ENCODE measurements at regions of chr18 and their contacts with region 1.

Region 1: DNA sequence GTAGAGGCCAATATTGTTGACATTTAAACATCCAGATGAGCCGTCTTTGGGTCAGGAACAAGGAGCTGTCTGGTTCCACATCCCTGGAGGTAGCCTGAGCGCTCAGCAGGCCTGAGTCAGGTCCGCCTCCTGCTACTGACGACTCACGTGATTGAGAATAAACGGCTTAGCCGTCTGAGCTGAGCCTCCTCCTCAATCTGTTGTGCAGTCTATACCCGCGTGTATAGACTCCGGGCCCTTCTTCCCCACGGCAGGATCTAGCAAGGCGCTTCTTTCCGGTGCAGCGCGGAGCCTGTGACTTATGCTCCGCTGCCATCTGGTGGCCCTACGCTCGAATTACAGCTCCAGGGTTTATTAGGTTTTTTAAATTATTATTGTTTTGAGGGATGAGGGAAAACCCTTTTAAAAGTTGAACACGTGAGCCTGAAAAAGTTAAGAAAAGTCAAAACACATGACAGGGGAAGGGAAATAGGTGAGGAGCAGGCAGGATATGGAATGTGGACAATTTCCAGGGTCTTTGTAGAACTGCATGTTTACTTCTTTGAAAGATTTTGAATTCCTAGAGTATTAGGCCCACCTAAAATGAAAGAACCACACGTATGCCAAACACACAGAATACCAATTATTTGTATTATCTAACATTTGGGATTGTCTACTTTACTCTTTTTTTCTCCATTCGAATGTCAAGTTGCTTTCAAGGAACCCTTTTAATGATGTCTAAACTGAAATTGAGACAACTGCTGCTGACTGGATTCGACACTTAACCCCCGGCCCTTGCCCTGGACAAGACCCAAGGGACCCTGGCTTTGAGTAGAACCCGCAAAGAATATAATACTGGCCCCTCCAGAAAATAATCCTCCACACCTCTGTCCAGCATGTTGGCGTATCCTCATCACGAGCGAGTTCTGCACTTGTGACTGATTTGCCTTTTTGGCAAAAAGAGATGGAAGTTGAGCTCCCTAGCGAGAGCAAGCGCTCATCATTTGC is 112.4 kb upstream of the ZNF236 start:
- DNase-seq: peak; percentile 92

Region 2: DNA sequence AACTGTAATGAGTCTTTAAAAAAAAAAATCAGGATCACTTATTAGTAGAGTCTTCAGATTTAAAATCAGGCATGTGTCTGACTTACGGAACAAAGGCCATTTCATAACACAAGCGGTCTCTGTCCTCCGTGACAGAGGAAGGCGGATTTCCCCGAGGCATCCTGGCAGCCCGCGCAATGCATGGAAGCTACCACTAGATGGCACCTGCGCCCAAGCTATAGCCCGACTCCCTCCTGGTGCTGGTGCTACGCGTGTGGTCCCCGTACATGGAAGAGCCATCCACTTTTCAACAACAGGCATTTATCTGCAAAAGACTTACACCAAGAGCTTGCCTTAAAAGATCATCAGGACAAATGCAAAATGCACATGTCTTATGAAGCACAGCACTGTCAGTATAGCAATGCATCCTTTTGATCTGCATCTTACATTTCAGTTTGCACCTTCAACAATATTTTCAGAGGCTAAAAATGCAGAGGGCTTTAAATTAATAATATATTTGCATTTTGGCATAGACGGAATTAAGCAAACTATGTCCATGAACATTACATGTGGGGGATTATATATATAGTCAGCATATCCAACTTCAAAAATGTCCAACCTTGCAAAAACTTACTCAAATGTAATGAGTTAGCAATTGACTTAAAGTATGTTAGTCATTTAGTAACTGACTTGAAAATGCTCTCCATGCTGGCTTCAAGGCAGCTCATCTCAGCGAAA is 310.9 kb before region 1 on chr18:
- intact Hi-C with region 1: loop called in 1 of 2 experiments (anchors 5 kb)
- DNase-seq: peak; percentile 94

Region 3: DNA sequence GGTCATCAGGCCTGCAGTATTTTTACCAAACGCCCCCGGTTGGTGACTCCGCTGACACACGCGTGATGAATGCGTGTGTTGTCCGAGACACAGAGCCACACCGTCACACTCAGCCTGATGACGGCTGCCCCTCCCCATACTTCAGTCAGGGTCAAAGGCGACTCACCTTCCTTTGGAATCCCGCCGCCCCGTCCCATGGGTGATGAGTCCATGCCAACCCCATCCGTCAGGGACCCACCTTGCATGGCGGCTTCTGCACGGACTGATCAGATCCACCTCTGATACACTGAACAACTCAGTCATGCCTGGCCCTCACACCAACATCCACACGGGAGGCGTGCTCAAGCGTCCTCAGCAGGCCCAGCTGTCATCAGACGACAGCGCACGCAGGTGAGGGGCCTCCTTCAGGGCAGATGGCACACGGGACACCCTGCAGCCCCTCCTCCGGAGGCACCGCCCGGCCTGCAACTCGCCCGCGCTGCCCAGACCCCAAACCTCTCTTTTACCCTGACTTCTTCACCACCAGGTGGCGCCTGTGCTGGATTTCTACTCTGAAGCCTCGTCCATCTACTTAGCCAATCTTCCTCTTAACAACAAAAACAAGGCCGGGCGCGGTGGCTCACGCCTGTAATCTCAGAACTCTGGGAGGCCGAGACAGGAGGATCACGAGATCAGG is 304.1 kb before region 1 on chr18:
- intact Hi-C with region 1: loop called in 1 of 2 experiments (anchors 5 kb)
- DNase-seq: peak; percentile 85